Common myeloid progenitor, CD34-positive (primary cell): ENCODE measurements at regions of chr14 and their contacts with region 1.

Region 1: GRCh38 chr14:72420725-72421474 is 473.0 kb downstream of the DPF3 start:
- DNase-seq: peak; percentile 78 to 89 (median 85)
- H3K4me3 ChIP-seq: no peak overlapping the region
- H3K27ac ChIP-seq: no peak overlapping the region
- H3K4me1 ChIP-seq: peaks cover 0 to 9% (median 0%) of the 10 kb centered on the region in 4 experiments
- H3K27me3 ChIP-seq: no peaks in the 10 kb centered on the region

Region 2: DNA sequence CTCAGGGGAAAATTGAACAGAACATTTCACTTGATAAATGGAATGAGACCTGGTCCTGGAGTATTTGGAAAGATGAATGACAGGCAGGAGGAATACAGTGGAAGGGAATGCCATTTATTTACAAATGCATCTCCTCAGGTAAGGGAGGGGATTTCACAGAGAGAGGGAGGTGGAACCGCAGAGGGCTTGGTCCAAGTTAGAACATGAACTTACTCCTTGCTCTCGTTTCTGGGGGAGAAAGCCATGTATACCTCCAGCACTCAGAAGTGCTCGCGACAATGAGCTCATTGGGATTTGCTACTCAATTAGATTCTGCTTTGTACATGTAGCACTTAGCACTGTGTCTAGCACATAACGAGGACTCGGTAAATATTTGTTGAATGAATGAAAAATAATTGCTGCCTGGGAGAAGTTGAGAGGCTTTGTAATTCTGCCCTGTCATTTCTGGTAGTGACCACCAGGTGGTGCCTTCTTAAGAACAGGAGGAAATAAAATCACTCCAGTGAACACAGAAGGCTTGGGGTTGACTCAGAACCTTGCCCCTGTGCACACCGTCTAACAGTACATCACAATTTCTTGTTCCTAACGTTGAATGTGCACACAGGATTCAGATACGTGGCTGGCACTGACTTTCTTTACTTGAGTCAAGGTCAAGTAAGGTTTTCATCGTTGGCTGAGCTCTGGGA is 397.0 kb before region 1 on chr14:
- CTCF ChIA-PET with region 1: interaction called, 75 read pairs
- POLR2A ChIA-PET with region 1: interaction called, 3 read pairs
- DNase-seq: peak; percentile 52 to 84 (median 70)
- H3K4me3 ChIP-seq: no peak overlapping the region
- H3K27ac ChIP-seq: no peak overlapping the region
- H3K4me1 ChIP-seq: no peaks in the 10 kb centered on the region
- H3K27me3 ChIP-seq: peaks cover 0 to 3% (median 0%) of the 10 kb centered on the region in 5 experiments

Region 3: GRCh38 chr14:72104011-72104613 is 316.8 kb before region 1 on chr14:
- CTCF ChIA-PET with region 1: interaction called, 15 read pairs
- POLR2A ChIA-PET with region 1: no interaction called
- DNase-seq: peak; percentile 25 to 49 (median 45)
- H3K4me3 ChIP-seq: no peak overlapping the region
- H3K27ac ChIP-seq: no peak overlapping the region
- H3K4me1 ChIP-seq: peaks cover 0 to 5% (median 0%) of the 10 kb centered on the region in 4 experiments
- H3K27me3 ChIP-seq: no peaks in the 10 kb centered on the region

Region 4: DNA sequence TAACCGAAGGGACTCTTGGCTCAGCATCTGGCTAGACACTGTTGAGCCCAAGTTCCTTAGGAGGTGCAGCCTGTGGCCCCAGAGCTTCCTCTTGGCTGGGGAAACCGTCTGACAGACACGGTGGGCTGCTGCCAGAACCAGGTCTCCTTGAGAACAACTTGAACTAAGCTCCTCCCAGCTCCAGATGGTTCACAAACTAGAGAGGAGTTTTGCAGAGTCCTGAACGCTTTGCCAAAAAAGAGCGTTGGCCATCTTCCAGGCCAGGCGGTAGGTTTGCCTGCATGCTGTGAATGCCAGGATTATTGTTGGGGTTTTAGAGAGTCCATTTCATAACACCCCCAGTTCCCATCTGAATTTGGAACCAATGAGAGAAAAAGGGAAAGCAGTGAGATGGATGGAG is 88.9 kb before region 1 on chr14:
- CTCF ChIA-PET with region 1: interaction called, 10 read pairs
- POLR2A ChIA-PET with region 1: no interaction called
- DNase-seq: peak; percentile 51 to 93 (median 88)
- H3K4me3 ChIP-seq: peak overlapping the region in 2 of 7 experiments; percentile 25 to 30
- H3K27ac ChIP-seq: no peak overlapping the region
- H3K4me1 ChIP-seq: peaks cover 0 to 22% (median 13%) of the 10 kb centered on the region in 4 experiments
- H3K27me3 ChIP-seq: no peaks in the 10 kb centered on the region

Region 5: GRCh38 chr14:72433521-72433920 is 12.6 kb after region 1 on chr14:
- CTCF ChIA-PET with region 1: interaction called, 24 read pairs
- POLR2A ChIA-PET with region 1: no interaction called
- DNase-seq: no peak
- H3K4me3 ChIP-seq: no peak overlapping the region
- H3K27ac ChIP-seq: no peak overlapping the region
- H3K4me1 ChIP-seq: peaks cover 0 to 4% (median 0%) of the 10 kb centered on the region in 4 experiments
- H3K27me3 ChIP-seq: peaks cover 0 to 8% (median 2%) of the 10 kb centered on the region in 5 experiments

Region 6: GRCh38 chr14:72439707-72440106 is 18.8 kb after region 1 on chr14:
- CTCF ChIA-PET with region 1: interaction called, 24 read pairs
- POLR2A ChIA-PET with region 1: no interaction called
- DNase-seq: peak; percentile 37 to 84 (median 79)
- H3K4me3 ChIP-seq: peak overlapping the region in 3 of 7 experiments; percentile 5 to 48 (median 41)
- H3K27ac ChIP-seq: no peak overlapping the region
- H3K4me1 ChIP-seq: peaks cover 10 to 60% (median 49%) of the 10 kb centered on the region in 4 experiments
- H3K27me3 ChIP-seq: peaks cover 0 to 13% (median 4%) of the 10 kb centered on the region in 5 experiments